ENCODE measurements at regions of chr1 and their contacts with region 1.

Region 1: DNA sequence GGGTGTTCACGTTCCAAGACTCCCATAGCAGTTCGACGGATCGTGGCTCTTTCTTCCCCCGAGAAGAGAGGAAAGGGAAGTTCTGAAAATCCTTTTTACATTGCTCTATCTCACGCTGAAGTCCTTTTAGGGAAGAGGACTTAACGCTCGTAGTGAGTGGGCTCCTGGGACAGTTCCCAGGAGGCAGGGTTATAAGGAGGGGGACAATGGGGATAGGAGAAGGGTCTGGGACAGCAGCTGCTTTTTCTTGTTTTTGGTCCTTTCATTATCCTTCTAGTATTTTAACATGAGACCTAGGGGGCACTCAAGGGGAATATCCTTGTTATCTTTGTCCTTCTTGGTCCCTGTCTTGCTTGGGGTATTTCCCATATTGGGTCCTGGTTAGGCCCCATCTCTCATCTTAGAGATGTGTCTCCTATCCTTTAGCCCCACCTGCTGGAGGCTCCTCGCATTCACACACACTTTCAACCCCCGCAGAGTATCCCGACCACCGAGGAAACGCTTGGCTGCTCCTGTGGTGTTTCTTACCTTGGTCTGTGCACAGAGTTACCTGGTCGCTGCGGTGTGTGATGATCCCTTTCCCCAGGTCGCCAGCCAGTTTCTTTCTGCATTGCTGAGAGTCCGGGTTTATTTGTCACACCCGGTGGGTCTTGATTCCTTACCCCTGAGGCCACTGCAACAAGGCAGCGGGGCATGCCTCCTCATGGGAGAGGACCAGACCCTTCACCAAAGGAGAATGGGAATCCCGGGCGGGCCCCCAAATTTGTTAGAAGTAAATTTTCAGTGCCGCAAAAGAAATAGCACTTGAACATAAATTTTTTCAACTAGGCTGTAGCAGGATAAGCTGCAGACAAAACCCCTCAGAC is 29.7 kb downstream of the SCCPDH start:
- DNase-seq: peak; percentile 38 to 81 (median 63)
- H3K4me3 ChIP-seq: no peak overlapping the region
- H3K27ac ChIP-seq: no peak overlapping the region
- H3K4me1 ChIP-seq: no peaks in the 10 kb centered on the region
- H3K27me3 ChIP-seq: no peaks in the 10 kb centered on the region
- CTCF ChIP-seq: peak; percentile 53 to 78 (median 74)
- POLR2A ChIP-seq: no peak

Region 2: GRCh38 chr1:246450611-246451251 is 303.2 kb before region 1 on chr1:
- intact Hi-C with region 1: no loop called
- DNase-seq: peak in 2 of 7 donors; percentile 20 to 33
- H3K4me3 ChIP-seq: no peak overlapping the region
- H3K27ac ChIP-seq: no peak overlapping the region
- H3K4me1 ChIP-seq: no peaks in the 10 kb centered on the region
- H3K27me3 ChIP-seq: no peaks in the 10 kb centered on the region
- CTCF ChIP-seq: peak; percentile 61 to 89 (median 82)
- POLR2A ChIP-seq: no peak

Region 3: GRCh38 chr1:246497331-246497915 is 256.5 kb before region 1 on chr1:
- intact Hi-C with region 1: loop called in 1 of 2 experiments (anchors 5 kb)
- DNase-seq: peak in 1 of 7 donors; percentile 22
- H3K4me3 ChIP-seq: no peak overlapping the region
- H3K27ac ChIP-seq: no peak overlapping the region
- H3K4me1 ChIP-seq: no peaks in the 10 kb centered on the region
- H3K27me3 ChIP-seq: no peaks in the 10 kb centered on the region
- CTCF ChIP-seq: peak; percentile 72 to 86 (median 78)
- POLR2A ChIP-seq: no peak

Region 4: DNA sequence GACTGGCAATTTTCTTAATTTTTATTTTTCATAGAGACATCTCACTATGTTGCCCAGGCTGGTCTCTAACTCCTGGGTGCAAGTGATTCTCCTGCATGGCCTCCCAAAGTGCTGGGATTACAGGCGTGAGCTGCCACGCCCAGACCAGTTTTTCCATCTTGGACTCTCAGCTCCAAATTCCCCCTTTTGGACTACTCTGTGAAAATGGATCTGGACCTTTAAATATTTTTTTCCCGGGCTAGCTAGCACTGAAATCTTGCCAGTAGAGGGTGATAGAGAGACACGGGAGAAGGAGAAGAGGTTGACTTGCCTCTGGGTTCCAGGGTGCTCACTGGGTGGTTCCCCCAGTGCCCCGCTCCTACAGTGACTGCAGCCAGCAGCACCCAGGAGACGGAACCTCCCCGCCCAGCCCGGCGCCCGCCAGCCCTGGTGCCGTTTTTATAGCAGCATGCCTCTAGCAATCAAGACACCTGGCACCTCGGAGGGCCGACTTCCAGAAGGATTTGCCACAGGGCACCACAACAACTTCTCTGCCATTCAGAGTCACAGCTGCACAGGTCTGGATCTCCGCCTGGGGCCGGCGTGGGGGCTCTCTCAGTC is 64.4 kb before region 1 on chr1:
- intact Hi-C with region 1: loop called in 1 of 2 experiments (anchors 10 kb)
- DNase-seq: peak; percentile 57 to 78 (median 66)
- H3K4me3 ChIP-seq: peak overlapping the region in 1 of 4 donors; percentile 42
- H3K27ac ChIP-seq: no peak overlapping the region
- H3K4me1 ChIP-seq: peaks cover 0 to 9% of the 10 kb centered on the region in 2 donors
- H3K27me3 ChIP-seq: no peaks in the 10 kb centered on the region
- CTCF ChIP-seq: peak; percentile 68 to 84 (median 78)
- POLR2A ChIP-seq: no peak